ENCODE measurements at regions of chr15 and their contacts with region 1.

Region 1: DNA sequence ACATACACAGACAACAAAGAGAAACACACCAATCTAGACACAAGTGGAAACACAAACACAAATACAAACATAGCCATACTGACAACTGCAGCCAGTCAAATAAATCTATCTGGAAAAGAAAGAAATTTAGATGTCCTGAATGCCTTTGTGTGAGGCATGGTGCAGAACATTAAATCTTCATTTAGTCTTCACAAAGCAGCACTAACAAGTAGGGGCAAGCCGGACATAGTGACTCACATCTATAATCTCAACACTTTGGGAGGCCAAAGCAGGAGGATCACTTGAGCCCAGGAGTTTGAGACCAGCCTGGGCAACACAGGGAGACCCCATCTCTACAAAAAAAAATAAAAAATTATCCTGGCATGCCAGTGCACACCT is 11.7 kb downstream of the MEGF11 start:
- DNase-seq: no peak

Region 2: DNA sequence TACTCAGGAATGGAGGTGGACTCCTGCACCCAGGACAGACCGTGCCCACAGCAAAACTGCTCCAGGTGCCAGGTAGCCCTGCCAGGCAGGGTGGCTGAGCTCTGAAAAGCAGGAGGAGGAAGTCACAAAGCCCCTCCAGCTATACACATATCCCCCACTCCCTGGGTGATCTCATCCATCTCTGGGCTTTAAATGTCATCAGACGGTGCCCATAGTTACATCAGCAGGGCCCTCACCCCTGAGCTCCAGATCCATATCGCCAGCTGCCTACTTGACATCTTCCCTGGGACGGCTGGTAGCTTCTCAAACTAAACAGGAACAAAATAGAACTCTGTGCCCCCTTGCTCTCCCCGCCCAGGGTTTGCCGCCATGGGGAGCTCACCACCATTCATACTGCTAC is 76.0 kb before region 1 on chr15:
- intact Hi-C with region 1: loop called (anchors 2 kb)
- DNase-seq: no peak

Measured in cardiac septum (tissue), 1 donor.